ENCODE measurements at regions of chr12 and their contacts with region 1.

Region 1: DNA sequence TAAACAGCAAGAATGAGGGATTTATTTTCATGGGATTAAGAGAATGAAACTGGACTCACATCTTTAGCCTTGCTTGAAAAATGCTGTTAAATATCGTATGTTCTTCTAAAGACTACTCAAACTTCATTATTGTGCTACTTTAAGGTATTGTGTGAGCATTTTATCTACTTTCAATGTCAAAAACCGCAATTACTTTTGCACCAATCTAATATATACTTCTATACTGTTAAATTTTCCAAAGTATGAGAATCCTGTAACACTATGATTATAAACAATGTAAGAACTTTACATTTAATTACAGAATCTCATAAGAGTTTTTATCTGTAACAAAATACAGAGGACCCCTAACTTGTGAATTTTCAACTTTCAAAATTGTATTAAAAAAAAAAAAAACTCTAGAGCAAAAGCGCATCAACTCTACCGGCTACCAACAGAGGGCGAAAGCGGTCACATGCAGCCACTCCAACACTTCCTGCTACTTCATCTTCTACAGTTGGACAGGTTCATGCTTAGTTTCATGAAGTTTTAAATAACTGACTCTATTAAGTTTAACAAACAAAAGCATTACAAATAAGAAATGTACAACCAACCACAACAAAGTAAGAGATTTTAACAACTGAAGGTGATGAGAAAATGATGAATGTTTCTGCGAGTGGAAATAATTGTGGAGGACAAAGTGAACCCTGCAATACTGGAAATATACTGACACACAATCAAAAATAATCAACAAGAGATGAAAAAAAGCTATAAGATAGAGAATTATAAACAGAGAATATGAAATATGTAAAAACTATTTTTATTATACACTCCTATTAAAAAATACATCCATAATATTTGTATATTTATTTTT is 210.9 kb downstream of the MED13L start:
- DNase-seq: peak; percentile 47 to 69 (median 49)
- ATAC-seq: peak; percentile 80
- H3K4me3 ChIP-seq: no peak overlapping the region
- H3K27ac ChIP-seq: no peak overlapping the region
- H3K4me1 ChIP-seq: peaks cover 0 to 13% of the 10 kb centered on the region in 2 experiments; a peak in 2 of 5 replicates
- H3K27me3 ChIP-seq: no peaks in the 10 kb centered on the region
- CTCF ChIP-seq: peak; percentile 72 to 85 (median 83)
- EP300 ChIP-seq: no peak
- POLR2A ChIP-seq: no peak
- RAD21 ChIP-seq: peak; percentile 53 to 65

Region 2: GRCh38 chr12:115774148-115774905 is 292.3 kb before region 1 on chr12:
- CTCF ChIA-PET with region 1: no interaction called
- POLR2A ChIA-PET with region 1: no interaction called
- in situ Hi-C with region 1: no loop called
- intact Hi-C with region 1: no loop called
- DNase-seq: no peak
- ATAC-seq: no peak
- H3K4me3 ChIP-seq: no peak overlapping the region
- H3K27ac ChIP-seq: no peak overlapping the region
- H3K4me1 ChIP-seq: no peaks in the 10 kb centered on the region
- H3K27me3 ChIP-seq: no peaks in the 10 kb centered on the region
- CTCF ChIP-seq: no peak
- EP300 ChIP-seq: no peak
- POLR2A ChIP-seq: no peak
- RAD21 ChIP-seq: no peak

Region 3: DNA sequence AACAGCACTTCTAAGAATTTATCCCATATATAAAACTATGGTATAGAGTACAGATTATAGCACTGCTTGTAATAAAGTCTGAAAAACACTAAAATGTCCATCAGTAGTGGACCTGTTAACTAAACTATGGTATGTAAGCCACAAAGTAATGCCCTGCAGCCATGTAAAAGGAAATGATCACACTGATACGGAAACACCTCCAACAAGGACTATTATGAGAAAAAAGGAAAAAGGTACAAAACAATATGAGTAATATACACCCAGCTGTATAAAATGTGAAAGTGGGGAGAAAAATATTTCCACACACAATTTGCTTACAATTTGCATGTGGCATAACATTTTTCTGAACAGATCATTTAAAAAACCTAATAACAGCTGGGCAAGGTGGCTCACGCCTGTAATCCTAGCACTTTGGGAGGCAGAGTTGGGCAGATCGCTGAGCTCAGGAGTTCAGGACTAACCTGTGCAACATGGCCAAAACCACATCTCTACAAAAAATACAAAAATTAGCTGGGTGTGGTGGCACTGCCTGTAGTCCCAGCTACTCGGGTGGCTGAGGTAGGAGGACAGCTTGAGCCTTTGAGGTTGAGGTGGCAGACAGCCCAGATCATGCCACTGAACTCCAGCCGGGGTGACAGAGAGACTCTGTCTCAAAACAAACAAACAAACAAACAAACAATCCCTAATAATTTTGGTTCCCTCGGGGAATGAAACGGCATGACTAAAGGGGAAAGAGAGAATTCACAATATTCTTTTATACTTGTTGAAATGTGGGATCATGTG is 39.6 kb before region 1 on chr12:
- CTCF ChIA-PET with region 1: no interaction called
- POLR2A ChIA-PET with region 1: no interaction called
- in situ Hi-C with region 1: no loop called
- intact Hi-C with region 1: no loop called
- DNase-seq: no peak
- ATAC-seq: no peak
- H3K4me3 ChIP-seq: no peak overlapping the region
- H3K27ac ChIP-seq: no peak overlapping the region
- H3K4me1 ChIP-seq: no peaks in the 10 kb centered on the region
- H3K27me3 ChIP-seq: no peaks in the 10 kb centered on the region
- CTCF ChIP-seq: no peak
- EP300 ChIP-seq: no peak
- POLR2A ChIP-seq: no peak
- RAD21 ChIP-seq: no peak

Region 4: DNA sequence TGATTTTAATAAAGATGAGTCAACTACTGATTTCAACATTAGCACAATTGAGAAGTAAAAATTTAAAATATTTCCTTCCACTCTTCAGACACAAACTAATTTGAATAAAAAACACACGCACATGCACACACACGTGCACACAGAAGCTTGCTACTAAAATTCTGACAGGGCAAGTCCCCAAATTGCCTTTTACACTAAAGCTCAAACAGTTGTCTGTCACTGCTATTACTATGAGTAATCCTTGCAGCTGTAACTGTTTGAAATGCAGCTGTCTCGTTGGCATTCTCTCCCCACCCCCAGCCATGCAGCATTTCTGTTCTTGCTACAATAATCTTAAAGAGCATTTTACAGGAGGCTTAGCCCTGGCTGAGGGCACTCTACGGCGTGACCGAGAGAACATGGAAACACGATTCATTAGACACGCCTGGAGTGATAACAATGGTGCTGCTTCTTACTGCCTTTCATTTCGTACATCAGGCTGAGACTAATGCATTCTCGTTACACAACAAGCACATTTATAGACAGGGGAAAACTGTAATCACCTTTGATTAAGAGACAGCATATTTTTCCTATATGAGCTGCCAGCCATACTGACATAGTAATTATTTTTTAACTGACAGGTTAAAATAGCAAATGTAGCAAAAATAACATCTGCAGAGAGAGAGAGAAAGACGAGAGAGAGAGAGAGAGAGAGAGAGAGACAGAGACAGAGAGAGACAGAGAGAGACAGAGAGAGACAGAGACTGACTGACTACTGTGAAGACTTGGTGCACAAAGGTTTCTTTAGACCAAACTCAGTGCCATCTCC is 57.0 kb after region 1 on chr12:
- CTCF ChIA-PET with region 1: no interaction called
- POLR2A ChIA-PET with region 1: interaction called, 3 read pairs
- in situ Hi-C with region 1: no loop called
- intact Hi-C with region 1: loop called (anchors 5 kb)
- DNase-seq: peak; percentile 20 to 71 (median 42)
- ATAC-seq: peak; percentile 74
- H3K4me3 ChIP-seq: peak overlapping the region; percentile 32
- H3K27ac ChIP-seq: peak overlapping the region; percentile 80
- H3K4me1 ChIP-seq: peaks cover 0 to 33% of the 10 kb centered on the region in 2 experiments; a peak in 3 of 5 replicates
- H3K27me3 ChIP-seq: no peaks in the 10 kb centered on the region
- CTCF ChIP-seq: no peak
- EP300 ChIP-seq: peak; percentile 21; the same call in 1 of the 2 replicates
- POLR2A ChIP-seq: no peak
- RAD21 ChIP-seq: no peak

Region 5: DNA sequence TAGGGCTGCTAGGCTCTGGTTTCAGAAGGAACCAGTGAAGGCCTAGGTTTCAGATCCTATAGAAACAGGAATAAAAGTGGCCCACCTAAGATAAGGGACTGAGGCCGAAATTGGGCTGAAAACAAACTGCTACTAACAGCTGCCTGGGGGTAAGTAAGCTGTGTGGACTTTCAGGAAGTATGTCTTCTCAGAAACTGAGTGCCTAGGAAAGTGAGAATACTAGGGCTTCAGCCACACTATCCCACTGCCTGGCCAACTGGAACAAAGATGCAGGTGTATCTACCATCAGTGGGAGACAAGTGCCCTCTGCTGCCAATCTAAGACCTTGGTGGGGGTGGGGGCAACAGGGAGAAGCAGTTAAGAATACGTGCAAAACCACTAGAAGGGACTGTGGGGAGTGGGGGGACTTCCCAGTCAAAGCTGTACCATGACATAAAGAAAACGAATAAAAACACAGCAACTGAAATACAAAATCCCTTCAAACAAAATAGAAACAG is 128.4 kb after region 1 on chr12:
- CTCF ChIA-PET with region 1: no interaction called
- POLR2A ChIA-PET with region 1: no interaction called
- in situ Hi-C with region 1: no loop called
- intact Hi-C with region 1: loop called (anchors 10 kb)
- DNase-seq: peak in 1 of 4 experiments; percentile 53
- ATAC-seq: peak; percentile 58
- H3K4me3 ChIP-seq: no peak overlapping the region
- H3K27ac ChIP-seq: peak overlapping the region; percentile 55
- H3K4me1 ChIP-seq: peaks cover 12 to 29% of the 10 kb centered on the region in 2 experiments; a peak in 4 of 5 replicates
- H3K27me3 ChIP-seq: no peaks in the 10 kb centered on the region
- CTCF ChIP-seq: peak in 1 of 3 experiments; percentile 26; a peak in 1 of 6 replicates
- EP300 ChIP-seq: no peak
- POLR2A ChIP-seq: no peak
- RAD21 ChIP-seq: no peak